ENCODE measurements at regions of chr9 and their contacts with region 1.

Region 1: GRCh38 chr9:15135164-15135792 is 171.7 kb downstream of the TTC39B start:
- DNase-seq: peak in 8 of 9 donors; percentile 27 to 73 (median 59)
- ATAC-seq: peak; percentile 92
- H3K4me3 ChIP-seq: no peak overlapping the region
- H3K4me3 Mint-ChIP-seq: peak overlapping the region in 6 of 10 donors; percentile 3 to 40 (median 32)
- H3K27ac ChIP-seq: no peak overlapping the region
- H3K27ac Mint-ChIP-seq: peak overlapping the region in 1 of 9 donors; percentile 32
- H3K4me1 ChIP-seq: no peaks in the 10 kb centered on the region
- H3K4me1 Mint-ChIP-seq: peaks cover 4 to 10% (median 5%) of the 10 kb centered on the region in 7 donors
- H3K27me3 ChIP-seq: no peaks in the 10 kb centered on the region
- H3K27me3 Mint-ChIP-seq: peaks cover 0 to 4% (median 3%) of the 10 kb centered on the region in 5 donors

Region 2: GRCh38 chr9:13351778-13352386 is 1783.4 kb before region 1 on chr9:
- CTCF ChIA-PET with region 1: no interaction called
- POLR2A ChIA-PET with region 1: no interaction called
- intact Hi-C with region 1: loop called in 1 of 2 experiments (anchors 5 kb)
- DNase-seq: no peak
- ATAC-seq: no peak
- H3K4me3 ChIP-seq: no peak overlapping the region
- H3K4me3 Mint-ChIP-seq: no peak overlapping the region
- H3K27ac ChIP-seq: no peak overlapping the region
- H3K27ac Mint-ChIP-seq: no peak overlapping the region
- H3K4me1 ChIP-seq: no peaks in the 10 kb centered on the region
- H3K4me1 Mint-ChIP-seq: no peaks in the 10 kb centered on the region
- H3K27me3 ChIP-seq: no peaks in the 10 kb centered on the region
- H3K27me3 Mint-ChIP-seq: no peaks in the 10 kb centered on the region

Region 3: DNA sequence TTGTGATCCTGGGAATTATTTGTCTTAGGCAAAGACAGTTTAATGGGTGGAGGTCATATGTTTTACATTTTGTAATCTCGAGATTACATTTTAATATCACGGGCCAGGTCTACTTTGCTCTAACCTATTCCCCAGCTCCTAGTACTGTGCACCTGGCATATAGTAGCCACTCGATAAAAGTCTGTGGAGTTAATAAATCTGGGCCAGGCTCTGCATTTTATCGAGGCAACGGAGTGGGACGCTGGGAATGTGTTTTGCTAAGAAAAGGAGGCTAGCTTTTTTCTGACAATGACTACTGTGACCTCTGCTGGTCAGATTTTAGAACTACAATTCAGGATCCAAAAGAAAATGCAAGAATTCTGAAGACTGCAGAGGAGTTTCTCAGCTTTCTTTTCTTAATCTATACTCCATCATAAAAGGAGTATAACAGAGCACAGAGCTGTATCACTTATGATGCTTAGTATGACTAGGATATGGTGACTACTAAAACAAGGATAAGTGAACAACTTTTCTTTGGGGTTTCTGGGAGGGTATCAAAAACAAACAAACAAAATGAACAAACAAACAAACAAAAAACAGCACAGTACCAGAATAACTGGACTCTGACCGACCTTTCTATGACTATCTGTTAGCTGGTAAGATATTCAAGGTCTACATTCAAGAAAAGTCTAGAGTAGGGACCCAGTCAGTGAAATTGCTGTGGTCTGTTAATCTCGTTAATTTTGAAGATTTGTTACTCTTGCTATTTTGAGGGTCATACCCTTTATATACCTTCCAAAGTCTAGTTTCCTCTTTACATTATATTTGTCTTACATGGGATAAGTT is 366.7 kb before region 1 on chr9:
- CTCF ChIA-PET with region 1: no interaction called
- POLR2A ChIA-PET with region 1: no interaction called
- intact Hi-C with region 1: loop called (anchors 1 to 5 kb)
- DNase-seq: peak in 5 of 9 donors; percentile 24 to 35 (median 28)
- ATAC-seq: no peak
- H3K4me3 ChIP-seq: no peak overlapping the region
- H3K4me3 Mint-ChIP-seq: no peak overlapping the region
- H3K27ac ChIP-seq: no peak overlapping the region
- H3K27ac Mint-ChIP-seq: no peak overlapping the region
- H3K4me1 ChIP-seq: no peaks in the 10 kb centered on the region
- H3K4me1 Mint-ChIP-seq: no peaks in the 10 kb centered on the region
- H3K27me3 ChIP-seq: peaks cover 0 to 5% of the 10 kb centered on the region in 2 donors
- H3K27me3 Mint-ChIP-seq: peaks cover 8 to 40% (median 17%) of the 10 kb centered on the region in 5 donors

Region 4: GRCh38 chr9:14846871-14847311 is 288.4 kb before region 1 on chr9:
- CTCF ChIA-PET with region 1: interaction called, 3 read pairs
- POLR2A ChIA-PET with region 1: no interaction called
- intact Hi-C with region 1: loop called in 1 of 2 experiments (anchors 2 kb)
- DNase-seq: peak in 7 of 9 donors; percentile 18 to 54 (median 30)
- ATAC-seq: peak; percentile 66
- H3K4me3 ChIP-seq: no peak overlapping the region
- H3K4me3 Mint-ChIP-seq: no peak overlapping the region
- H3K27ac ChIP-seq: no peak overlapping the region
- H3K27ac Mint-ChIP-seq: no peak overlapping the region
- H3K4me1 ChIP-seq: no peaks in the 10 kb centered on the region
- H3K4me1 Mint-ChIP-seq: no peaks in the 10 kb centered on the region
- H3K27me3 ChIP-seq: peaks cover 0 to 4% of the 10 kb centered on the region in 2 donors
- H3K27me3 Mint-ChIP-seq: peaks cover 2 to 21% (median 13%) of the 10 kb centered on the region in 5 donors

Region 5: DNA sequence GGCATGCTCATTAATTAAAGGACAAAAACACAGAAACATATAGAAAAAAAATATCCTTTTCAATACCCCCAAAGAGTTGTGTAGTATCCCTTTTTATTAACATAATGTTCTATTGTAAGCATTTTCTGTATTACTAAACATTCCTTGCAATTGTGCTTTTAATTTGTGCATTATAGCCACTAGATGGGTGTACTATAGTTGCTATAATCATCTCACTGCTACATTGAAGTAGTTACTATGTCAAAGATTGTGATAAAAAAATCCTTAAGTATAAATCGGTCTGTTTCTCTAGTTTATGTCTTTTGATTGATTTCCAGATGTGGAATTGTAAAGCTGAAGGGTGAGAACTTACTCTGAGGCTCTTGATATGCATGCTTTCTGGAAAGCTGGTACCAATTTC is 246.4 kb before region 1 on chr9:
- CTCF ChIA-PET with region 1: no interaction called
- POLR2A ChIA-PET with region 1: no interaction called
- intact Hi-C with region 1: loop called in 1 of 2 experiments (anchors 1 kb)
- DNase-seq: no peak
- ATAC-seq: no peak
- H3K4me3 ChIP-seq: no peak overlapping the region
- H3K4me3 Mint-ChIP-seq: no peak overlapping the region
- H3K27ac ChIP-seq: no peak overlapping the region
- H3K27ac Mint-ChIP-seq: no peak overlapping the region
- H3K4me1 ChIP-seq: no peaks in the 10 kb centered on the region
- H3K4me1 Mint-ChIP-seq: no peaks in the 10 kb centered on the region
- H3K27me3 ChIP-seq: no peaks in the 10 kb centered on the region
- H3K27me3 Mint-ChIP-seq: peaks cover 0 to 2% (median 0%) of the 10 kb centered on the region in 5 donors

Region 6: GRCh38 chr9:15271403-15271802 is 136.1 kb after region 1 on chr9:
- CTCF ChIA-PET with region 1: no interaction called
- POLR2A ChIA-PET with region 1: no interaction called
- intact Hi-C with region 1: no loop called
- DNase-seq: no peak
- ATAC-seq: peak; percentile 54
- H3K4me3 ChIP-seq: no peak overlapping the region
- H3K4me3 Mint-ChIP-seq: no peak overlapping the region
- H3K27ac ChIP-seq: no peak overlapping the region
- H3K27ac Mint-ChIP-seq: peak overlapping the region in 1 of 9 donors; percentile 21
- H3K4me1 ChIP-seq: peaks cover 0 to 4% of the 10 kb centered on the region in 2 donors
- H3K4me1 Mint-ChIP-seq: peaks cover 27 to 69% (median 52%) of the 10 kb centered on the region in 7 donors
- H3K27me3 ChIP-seq: no peaks in the 10 kb centered on the region
- H3K27me3 Mint-ChIP-seq: no peaks in the 10 kb centered on the region

Measured in naive thymus-derived CD4-positive, alpha-beta T cell (primary cell).